Ascending aorta (tissue), 2 donors: ENCODE measurements at regions of chr3 and their contacts with region 1.

Region 1: DNA sequence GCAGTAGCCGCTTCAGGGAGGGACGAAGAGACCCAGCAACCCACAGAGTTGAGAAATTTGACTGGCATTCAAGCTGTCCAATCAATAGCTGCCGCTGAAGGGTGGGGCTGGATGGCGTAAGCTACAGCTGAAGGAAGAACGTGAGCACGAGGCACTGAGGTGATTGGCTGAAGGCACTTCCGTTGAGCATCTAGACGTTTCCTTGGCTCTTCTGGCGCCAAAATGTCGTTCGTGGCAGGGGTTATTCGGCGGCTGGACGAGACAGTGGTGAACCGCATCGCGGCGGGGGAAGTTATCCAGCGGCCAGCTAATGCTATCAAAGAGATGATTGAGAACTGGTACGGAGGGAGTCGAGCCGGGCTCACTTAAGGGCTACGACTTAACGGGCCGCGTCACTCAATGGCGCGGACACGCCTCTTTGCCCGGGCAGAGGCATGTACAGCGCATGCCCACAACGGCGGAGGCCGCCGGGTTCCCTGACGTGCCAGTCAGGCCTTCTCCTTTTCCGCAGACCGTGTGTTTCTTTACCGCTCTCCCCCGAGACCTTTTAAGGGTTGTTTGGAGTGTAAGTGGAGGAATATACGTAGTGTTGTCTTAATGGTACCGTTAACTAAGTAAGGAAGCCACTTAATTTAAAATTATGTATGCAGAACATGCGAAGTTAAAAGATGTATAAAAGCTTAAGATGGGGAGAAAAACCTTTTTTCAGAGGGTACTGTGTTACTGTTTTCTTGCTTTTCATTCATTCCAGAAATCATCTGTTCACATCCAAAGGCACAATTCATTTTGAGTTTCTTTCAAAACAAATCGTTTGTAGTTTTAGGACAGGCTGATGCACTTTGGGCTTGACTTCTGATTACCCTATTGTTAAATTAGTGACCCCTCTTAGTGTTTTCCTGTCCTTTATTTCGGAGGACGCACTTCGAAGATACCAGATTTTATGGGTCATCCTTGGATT is at the start of gene MLH1:
- DNase-seq: peak; percentile 100
- H3K4me3 ChIP-seq: peak within 1 kb of the TSS; percentile 70 to 81
- H3K27ac ChIP-seq: peak within 1 kb of the TSS; percentile 99
- H3K4me1 ChIP-seq: peaks cover 17 to 40% of the 10 kb centered on the region in 2 donors
- H3K27me3 ChIP-seq: no peaks in the 10 kb centered on the region
- CTCF ChIP-seq: no peak
- total RNA-seq, gene MLH1: 18.0 TPM

Region 2: GRCh38 chr3:36025232-36025631 is 968.4 kb before region 1 on chr3:
- intact Hi-C with region 1: no loop called
- DNase-seq: no peak
- H3K4me3 ChIP-seq: no peak overlapping the region
- H3K27ac ChIP-seq: no peak overlapping the region
- H3K4me1 ChIP-seq: no peaks in the 10 kb centered on the region
- H3K27me3 ChIP-seq: no peaks in the 10 kb centered on the region
- CTCF ChIP-seq: no peak

Region 3: GRCh38 chr3:36918050-36918449 is 75.6 kb before region 1 on chr3:
- intact Hi-C with region 1: no loop called
- DNase-seq: no peak
- H3K4me3 ChIP-seq: no peak overlapping the region
- H3K27ac ChIP-seq: no peak overlapping the region
- H3K4me1 ChIP-seq: no peaks in the 10 kb centered on the region
- H3K27me3 ChIP-seq: no peaks in the 10 kb centered on the region
- CTCF ChIP-seq: no peak

Region 4: GRCh38 chr3:36981006-36981405 is 12.6 kb before region 1 on chr3:
- intact Hi-C with region 1: no loop called
- DNase-seq: no peak
- H3K4me3 ChIP-seq: no peak overlapping the region
- H3K27ac ChIP-seq: no peak overlapping the region
- H3K4me1 ChIP-seq: no peaks in the 10 kb centered on the region
- H3K27me3 ChIP-seq: no peaks in the 10 kb centered on the region
- CTCF ChIP-seq: no peak

Region 5: GRCh38 chr3:37054370-37054769 is 60.8 kb after region 1 on chr3:
- intact Hi-C with region 1: loop called (anchors 5 kb)
- DNase-seq: no peak
- H3K4me3 ChIP-seq: peak overlapping the region in 1 of 2 donors; percentile 18
- H3K27ac ChIP-seq: peak overlapping the region; percentile 90 to 92
- H3K4me1 ChIP-seq: peaks cover 13 to 58% of the 10 kb centered on the region in 2 donors
- H3K27me3 ChIP-seq: no peaks in the 10 kb centered on the region
- CTCF ChIP-seq: no peak

Region 6: DNA sequence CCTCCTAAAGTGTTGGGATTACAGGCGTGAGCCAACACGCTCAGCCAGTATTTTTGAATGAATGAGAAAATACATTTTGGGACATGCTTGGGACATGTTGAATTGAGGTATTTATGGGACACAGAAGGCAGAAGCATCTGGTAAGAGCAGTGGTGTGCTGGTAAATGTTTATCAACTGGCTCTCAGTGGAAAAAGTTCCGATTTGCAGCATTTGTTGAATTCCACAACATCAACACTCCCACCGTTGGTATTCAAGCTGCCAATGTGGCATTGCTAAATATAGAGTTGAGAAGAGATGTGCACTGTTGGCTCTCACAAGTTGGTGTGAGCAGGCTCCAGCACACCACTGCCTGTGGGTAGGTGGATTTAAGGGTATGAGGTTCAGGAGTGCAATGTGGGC is 216.6 kb after region 1 on chr3:
- intact Hi-C with region 1: loop called (anchors 2 kb)
- DNase-seq: no peak
- H3K4me3 ChIP-seq: no peak overlapping the region
- H3K27ac ChIP-seq: peak overlapping the region in 1 of 2 donors; percentile 14
- H3K4me1 ChIP-seq: no peaks in the 10 kb centered on the region
- H3K27me3 ChIP-seq: no peaks in the 10 kb centered on the region
- CTCF ChIP-seq: no peak

Region 7: GRCh38 chr3:37243820-37244748 is 250.5 kb after region 1 on chr3:
- intact Hi-C with region 1: loop called (anchors 1 kb)
- DNase-seq: peak; percentile 39 to 94
- H3K4me3 ChIP-seq: peak overlapping the region; percentile 80 to 93
- H3K27ac ChIP-seq: peak overlapping the region; percentile 96 to 98
- H3K4me1 ChIP-seq: peaks cover 5 to 29% of the 10 kb centered on the region in 2 donors
- H3K27me3 ChIP-seq: no peaks in the 10 kb centered on the region
- CTCF ChIP-seq: no peak

Region 8: GRCh38 chr3:38136777-38137614 is 1143.4 kb after region 1 on chr3 and contains the start of gene ACAA1:
- intact Hi-C with region 1: loop called (anchors 10 kb)
- DNase-seq: peak; percentile 99 to 100
- H3K4me3 ChIP-seq: peak within 1 kb of the TSS; percentile 87 to 98
- H3K27ac ChIP-seq: peak within 1 kb of the TSS; percentile 90 to 97
- H3K4me1 ChIP-seq: peaks cover 0 to 28% of the 10 kb centered on the region in 2 donors
- H3K27me3 ChIP-seq: no peaks in the 10 kb centered on the region
- CTCF ChIP-seq: no peak
- total RNA-seq, gene ACAA1: 52.6 TPM